CD8-positive, alpha-beta T cell (primary cell): ENCODE measurements at regions of chr10 and their contacts with region 1.

Region 1: DNA sequence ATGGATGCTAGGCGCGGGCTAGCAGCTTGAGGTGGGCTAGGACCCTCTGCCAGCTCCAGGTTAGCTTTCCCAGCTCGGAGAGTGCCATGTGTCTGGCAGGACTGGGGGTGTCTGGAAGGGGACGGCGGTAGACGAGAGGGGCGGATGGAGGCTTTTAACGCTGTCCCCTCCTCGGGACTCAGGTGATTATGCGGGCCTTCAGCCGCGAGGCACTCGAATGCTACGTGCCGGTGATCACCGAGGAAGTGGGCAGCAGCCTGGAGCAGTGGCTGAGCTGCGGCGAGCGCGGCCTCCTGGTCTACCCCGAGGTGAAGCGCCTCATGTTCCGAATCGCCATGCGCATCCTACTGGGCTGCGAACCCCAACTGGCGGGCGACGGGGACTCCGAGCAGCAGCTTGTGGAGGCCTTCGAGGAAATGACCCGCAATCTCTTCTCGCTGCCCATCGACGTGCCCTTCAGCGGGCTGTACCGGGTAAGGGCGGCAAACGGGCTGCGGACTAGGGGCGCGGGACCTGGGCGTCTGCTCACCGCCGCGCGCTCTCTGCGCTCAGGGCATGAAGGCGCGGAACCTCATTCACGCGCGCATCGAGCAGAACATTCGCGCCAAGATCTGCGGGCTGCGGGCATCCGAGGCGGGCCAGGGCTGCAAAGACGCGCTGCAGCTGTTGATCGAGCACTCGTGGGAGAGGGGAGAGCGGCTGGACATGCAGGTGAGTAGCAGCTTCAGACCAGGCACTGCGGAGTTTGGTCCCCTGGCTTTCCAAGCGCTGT is 1.1 kb downstream of the CYP26A1 start:
- DNase-seq: no peak
- ATAC-seq: no peak
- H3K4me3 ChIP-seq: no peak overlapping the region
- H3K4me3 Mint-ChIP-seq: no peak overlapping the region
- H3K27ac ChIP-seq: no peak overlapping the region
- H3K27ac Mint-ChIP-seq: no peak overlapping the region
- H3K4me1 ChIP-seq: peaks cover 11% of the 10 kb centered on the region
- H3K4me1 Mint-ChIP-seq: peaks cover 24% of the 10 kb centered on the region
- H3K27me3 ChIP-seq: peaks cover 5 to 7% of the 10 kb centered on the region in 2 experiments
- H3K27me3 Mint-ChIP-seq: peaks cover 59% of the 10 kb centered on the region
- CTCF ChIP-seq: no peak

Region 2: DNA sequence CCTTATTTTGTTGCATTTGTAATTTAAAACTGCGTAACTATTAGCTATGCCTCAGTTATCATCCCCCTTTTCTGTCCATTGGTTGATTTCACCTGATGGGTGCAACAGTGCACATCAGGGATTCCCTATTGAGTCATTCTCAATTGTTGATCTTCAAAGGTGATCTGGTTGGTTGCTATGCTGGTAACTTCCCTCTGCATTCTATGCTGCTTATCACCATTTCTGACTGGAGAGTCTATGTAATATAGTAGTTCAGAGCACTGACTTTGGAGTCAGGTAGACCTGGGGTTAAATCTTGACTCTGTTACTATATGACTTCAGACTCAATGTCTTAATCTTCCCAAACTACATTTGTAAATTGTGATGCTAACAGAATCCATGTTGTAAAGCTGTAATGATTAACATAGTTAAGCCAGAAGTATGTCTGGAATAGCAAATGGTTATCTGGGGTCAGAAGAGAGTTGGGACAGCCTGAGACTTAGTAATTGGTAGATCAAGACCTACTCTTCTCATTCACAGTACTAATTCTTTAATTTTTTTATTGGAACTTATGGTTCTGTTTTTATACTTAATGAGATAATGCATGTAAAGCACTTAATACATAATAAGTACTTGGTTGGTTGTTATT is 188.3 kb before region 1 on chr10:
- CTCF ChIA-PET with region 1: interaction called, 4 read pairs
- POLR2A ChIA-PET with region 1: no interaction called
- intact Hi-C with region 1: loop called in 1 of 2 experiments (anchors 5 kb)
- DNase-seq: no peak
- ATAC-seq: no peak
- H3K4me3 ChIP-seq: no peak overlapping the region
- H3K4me3 Mint-ChIP-seq: no peak overlapping the region
- H3K27ac ChIP-seq: no peak overlapping the region
- H3K27ac Mint-ChIP-seq: no peak overlapping the region
- H3K4me1 ChIP-seq: no peaks in the 10 kb centered on the region
- H3K4me1 Mint-ChIP-seq: peaks cover 5% of the 10 kb centered on the region
- H3K27me3 ChIP-seq: no peaks in the 10 kb centered on the region
- H3K27me3 Mint-ChIP-seq: no peaks in the 10 kb centered on the region
- CTCF ChIP-seq: no peak

Region 3: GRCh38 chr10:93152136-93152535 is 77.4 kb after region 1 on chr10:
- CTCF ChIA-PET with region 1: no interaction called
- POLR2A ChIA-PET with region 1: no interaction called
- intact Hi-C with region 1: no loop called
- DNase-seq: no peak
- ATAC-seq: no peak
- H3K4me3 ChIP-seq: no peak overlapping the region
- H3K4me3 Mint-ChIP-seq: no peak overlapping the region
- H3K27ac ChIP-seq: no peak overlapping the region
- H3K27ac Mint-ChIP-seq: no peak overlapping the region
- H3K4me1 ChIP-seq: peaks cover 14% of the 10 kb centered on the region
- H3K4me1 Mint-ChIP-seq: peaks cover 20% of the 10 kb centered on the region
- H3K27me3 ChIP-seq: no peaks in the 10 kb centered on the region
- H3K27me3 Mint-ChIP-seq: peaks cover 3% of the 10 kb centered on the region
- CTCF ChIP-seq: no peak

Region 4: GRCh38 chr10:93406364-93407145 is 331.8 kb after region 1 on chr10:
- CTCF ChIA-PET with region 1: no interaction called
- POLR2A ChIA-PET with region 1: no interaction called
- intact Hi-C with region 1: no loop called
- DNase-seq: peak in 1 of 9 experiments; percentile 13
- ATAC-seq: no peak
- H3K4me3 ChIP-seq: no peak overlapping the region
- H3K4me3 Mint-ChIP-seq: no peak overlapping the region
- H3K27ac ChIP-seq: no peak overlapping the region
- H3K27ac Mint-ChIP-seq: no peak overlapping the region
- H3K4me1 ChIP-seq: peaks cover 29% of the 10 kb centered on the region
- H3K4me1 Mint-ChIP-seq: peaks cover 25% of the 10 kb centered on the region
- H3K27me3 ChIP-seq: no peaks in the 10 kb centered on the region
- H3K27me3 Mint-ChIP-seq: peaks cover 3% of the 10 kb centered on the region
- CTCF ChIP-seq: no peak